Activated CD8-positive, alpha-beta memory T cell treated with anti-CD3 and anti-CD28 coated beads, Interleukin-2, amount 10 ng/mL, durations not matched to agents 7 days and 5 days (primary cell): ENCODE measurements at regions of chr1 and their contacts with region 1.

Region 1: DNA sequence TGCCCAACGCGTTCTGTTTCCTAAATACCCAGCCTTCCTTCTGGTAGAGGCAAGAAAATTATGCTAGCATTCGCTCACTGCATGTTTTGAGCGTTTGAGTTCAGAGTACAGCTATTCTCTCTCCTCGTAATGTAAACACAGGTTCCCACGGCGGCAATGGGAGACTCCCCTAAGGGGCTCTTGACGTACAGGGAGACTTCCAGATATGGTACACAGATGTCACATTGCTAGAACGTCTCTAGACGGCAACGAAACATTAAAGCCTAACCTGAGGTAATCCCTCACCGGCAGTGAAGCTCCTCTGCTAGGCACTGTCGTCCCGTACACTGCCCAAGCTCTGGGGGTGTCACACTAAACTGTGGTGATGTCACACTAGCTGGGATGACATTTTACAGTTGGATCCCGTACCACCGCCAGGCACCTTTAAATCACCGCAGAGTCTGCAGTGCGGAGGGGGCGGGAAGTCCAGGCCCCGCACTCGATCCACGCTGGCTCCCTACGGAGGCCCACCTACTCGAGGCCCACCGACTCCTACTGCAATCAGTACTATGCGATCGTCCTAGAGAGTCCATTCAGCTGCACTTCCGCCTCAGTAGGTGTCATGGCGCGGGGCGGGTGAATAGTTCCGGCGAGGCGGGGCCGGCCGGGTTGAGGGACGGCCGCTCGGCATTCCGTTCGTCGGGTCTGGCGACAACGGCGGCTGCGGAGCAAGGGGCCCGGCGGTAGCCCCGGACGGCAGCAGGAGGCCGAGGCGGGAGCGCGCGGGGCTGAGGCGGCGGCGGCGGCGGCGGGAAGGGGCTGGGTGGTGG is at the start of gene HIPK1:
- DNase-seq: peak; percentile 95
- ATAC-seq: peak; percentile 77
- H3K4me3 Mint-ChIP-seq: peak within 1 kb of the TSS; percentile 86
- H3K27ac Mint-ChIP-seq: peak within 1 kb of the TSS; percentile 100
- H3K4me1 Mint-ChIP-seq: peaks cover 41% of the 10 kb centered on the region
- H3K27me3 Mint-ChIP-seq: peaks cover under 1% of the 10 kb centered on the region
- total RNA-seq, gene HIPK1: 90.4 to 97.9 TPM

Region 2: GRCh38 chr1:113508364-113509164 is 420.6 kb before region 1 on chr1:
- CTCF ChIA-PET with region 1: no interaction called
- DNase-seq: no peak
- ATAC-seq: no peak
- H3K4me3 Mint-ChIP-seq: no peak overlapping the region
- H3K27ac Mint-ChIP-seq: no peak overlapping the region
- H3K4me1 Mint-ChIP-seq: no peaks in the 10 kb centered on the region
- H3K27me3 Mint-ChIP-seq: no peaks in the 10 kb centered on the region

Region 3: DNA sequence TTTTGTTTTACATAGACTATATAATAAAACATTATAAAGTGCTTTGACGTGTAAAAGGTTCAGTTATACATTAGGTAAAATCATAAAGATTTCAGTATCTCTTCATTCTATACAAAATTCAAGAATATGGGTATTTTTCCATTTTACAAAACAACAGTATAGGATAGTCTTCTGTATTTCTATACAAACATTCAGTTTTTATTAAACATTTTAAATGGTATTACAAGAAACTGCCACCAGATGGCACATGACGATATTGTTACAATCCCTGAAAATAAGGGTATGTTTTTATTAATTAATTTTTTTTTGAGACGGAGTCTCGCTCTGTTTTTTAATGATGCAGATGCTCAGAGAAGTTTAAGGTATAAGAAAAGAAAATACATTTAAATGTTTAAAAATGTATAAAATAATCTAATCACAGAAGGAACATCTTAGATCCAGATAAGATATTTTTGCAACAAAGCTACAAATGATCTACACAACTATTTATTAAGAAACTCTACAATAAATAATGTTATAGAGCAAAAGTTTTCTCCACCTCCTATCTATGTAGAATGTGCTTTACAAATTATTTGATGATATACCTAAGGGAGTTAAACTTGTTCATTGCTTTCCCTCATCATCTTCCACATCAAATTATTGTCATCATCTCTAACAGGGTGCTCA is 93.4 kb before region 1 on chr1:
- CTCF ChIA-PET with region 1: interaction called, 26 read pairs
- DNase-seq: no peak
- ATAC-seq: no peak
- H3K4me3 Mint-ChIP-seq: no peak overlapping the region
- H3K27ac Mint-ChIP-seq: peak overlapping the region; percentile 12
- H3K4me1 Mint-ChIP-seq: peaks cover 10% of the 10 kb centered on the region
- H3K27me3 Mint-ChIP-seq: no peaks in the 10 kb centered on the region

Region 4: DNA sequence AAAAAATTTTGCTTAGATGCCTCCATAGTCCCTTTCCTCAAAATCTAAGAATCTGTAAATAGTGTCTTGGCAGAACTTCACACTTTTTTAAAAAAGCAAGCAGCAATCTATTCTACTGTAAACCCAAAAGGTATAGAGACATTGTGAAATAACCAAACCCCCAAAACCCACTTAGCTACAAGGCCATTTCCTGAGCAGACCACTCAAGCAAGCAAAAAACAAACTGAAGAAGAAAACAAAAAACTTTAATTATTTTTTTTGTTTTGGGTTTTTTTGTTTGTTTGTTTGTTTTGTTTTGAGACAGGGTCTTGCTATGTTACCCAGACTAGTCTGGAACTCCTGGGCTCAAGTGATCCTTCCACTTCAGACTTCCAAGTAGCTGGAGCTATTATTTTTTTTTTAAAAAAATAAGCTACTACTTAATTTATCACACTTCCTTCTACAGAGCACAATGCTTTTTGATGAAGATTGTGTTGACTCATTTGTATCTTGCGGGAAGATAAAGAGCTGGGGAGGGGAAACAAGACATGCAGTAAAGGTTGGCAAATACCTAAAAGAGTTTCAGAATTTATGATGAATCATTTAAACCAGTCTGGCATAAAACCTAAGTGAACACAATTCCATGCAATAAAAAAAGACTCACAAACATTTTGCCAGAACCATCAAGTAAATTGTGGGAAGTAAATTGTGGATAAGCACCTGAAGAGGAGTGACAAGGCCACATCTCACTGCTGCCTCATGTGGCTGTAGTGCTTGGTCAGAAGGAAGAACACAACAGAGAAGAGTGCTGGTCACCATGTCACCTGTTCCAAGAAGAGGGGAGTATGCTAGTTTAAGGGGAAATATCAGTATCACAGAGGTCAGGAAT is 54.9 kb before region 1 on chr1:
- CTCF ChIA-PET with region 1: interaction called, 16 read pairs
- DNase-seq: peak; percentile 66
- ATAC-seq: peak; percentile 46
- H3K4me3 Mint-ChIP-seq: peak overlapping the region; percentile 65
- H3K27ac Mint-ChIP-seq: peak overlapping the region; percentile 87
- H3K4me1 Mint-ChIP-seq: peaks cover 62% of the 10 kb centered on the region
- H3K27me3 Mint-ChIP-seq: no peaks in the 10 kb centered on the region

Region 5: DNA sequence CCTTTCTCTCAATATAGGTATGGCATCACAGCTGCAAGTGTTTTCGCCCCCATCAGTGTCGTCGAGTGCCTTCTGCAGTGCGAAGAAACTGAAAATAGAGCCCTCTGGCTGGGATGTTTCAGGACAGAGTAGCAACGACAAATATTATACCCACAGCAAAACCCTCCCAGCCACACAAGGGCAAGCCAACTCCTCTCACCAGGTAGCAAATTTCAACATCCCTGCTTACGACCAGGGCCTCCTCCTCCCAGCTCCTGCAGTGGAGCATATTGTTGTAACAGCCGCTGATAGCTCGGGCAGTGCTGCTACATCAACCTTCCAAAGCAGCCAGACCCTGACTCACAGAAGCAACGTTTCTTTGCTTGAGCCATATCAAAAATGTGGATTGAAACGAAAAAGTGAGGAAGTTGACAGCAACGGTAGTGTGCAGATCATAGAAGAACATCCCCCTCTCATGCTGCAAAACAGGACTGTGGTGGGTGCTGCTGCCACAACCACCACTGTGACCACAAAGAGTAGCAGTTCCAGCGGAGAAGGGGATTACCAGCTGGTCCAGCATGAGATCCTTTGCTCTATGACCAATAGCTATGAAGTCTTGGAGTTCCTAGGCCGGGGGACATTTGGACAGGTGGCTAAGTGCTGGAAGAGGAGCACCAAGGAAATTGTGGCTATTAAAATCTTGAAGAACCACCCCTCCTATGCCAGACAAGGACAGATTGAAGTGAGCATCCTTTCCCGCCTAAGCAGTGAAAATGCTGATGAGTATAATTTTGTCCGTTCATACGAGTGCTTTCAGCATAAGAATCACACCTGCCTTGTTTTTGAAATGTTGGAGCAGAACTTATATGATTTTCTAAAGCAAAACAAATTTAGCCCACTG is 11.5 kb after region 1 on chr1:
- CTCF ChIA-PET with region 1: interaction called, 45 read pairs
- DNase-seq: peak; percentile 83
- ATAC-seq: peak; percentile 67
- H3K4me3 Mint-ChIP-seq: peak overlapping the region; percentile 64
- H3K27ac Mint-ChIP-seq: peak overlapping the region; percentile 84
- H3K4me1 Mint-ChIP-seq: peaks cover 73% of the 10 kb centered on the region
- H3K27me3 Mint-ChIP-seq: no peaks in the 10 kb centered on the region

Region 6: DNA sequence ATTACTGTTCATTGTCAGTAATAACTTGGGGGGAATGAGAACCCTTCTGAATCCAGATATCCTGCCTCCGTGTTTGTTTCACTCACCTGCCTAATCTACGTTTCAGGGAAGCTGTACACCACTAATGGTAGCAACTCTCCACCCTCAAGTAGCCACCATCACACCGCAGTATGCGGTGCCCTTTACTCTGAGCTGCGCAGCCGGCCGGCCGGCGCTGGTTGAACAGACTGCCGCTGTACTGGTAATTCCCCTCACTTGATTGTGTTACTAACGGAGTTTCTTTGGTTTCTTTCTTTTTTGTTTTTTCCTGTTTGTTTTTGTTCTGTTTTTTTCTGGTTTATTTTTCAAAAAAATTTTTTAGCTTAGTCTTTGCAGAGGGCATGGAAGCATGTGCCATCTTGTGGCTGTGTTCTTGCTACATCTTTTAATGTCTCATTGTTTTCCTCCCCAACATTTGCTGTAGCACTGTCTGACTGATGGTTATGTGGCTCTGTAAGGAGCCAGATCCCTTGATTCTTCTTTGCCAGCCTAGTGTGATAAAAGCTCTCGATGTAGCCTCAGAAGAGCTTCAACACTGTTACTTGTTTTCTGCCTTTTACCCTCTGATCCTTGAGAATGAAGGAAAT is 34.2 kb after region 1 on chr1:
- CTCF ChIA-PET with region 1: interaction called, 10 read pairs
- DNase-seq: no peak
- ATAC-seq: no peak
- H3K4me3 Mint-ChIP-seq: no peak overlapping the region
- H3K27ac Mint-ChIP-seq: peak overlapping the region; percentile 47
- H3K4me1 Mint-ChIP-seq: no peaks in the 10 kb centered on the region
- H3K27me3 Mint-ChIP-seq: no peaks in the 10 kb centered on the region

Region 7: GRCh38 chr1:113998327-113998726 is 69.2 kb after region 1 on chr1:
- CTCF ChIA-PET with region 1: no interaction called
- DNase-seq: no peak
- ATAC-seq: no peak
- H3K4me3 Mint-ChIP-seq: no peak overlapping the region
- H3K27ac Mint-ChIP-seq: no peak overlapping the region
- H3K4me1 Mint-ChIP-seq: no peaks in the 10 kb centered on the region
- H3K27me3 Mint-ChIP-seq: peaks cover 4% of the 10 kb centered on the region

Region 8: DNA sequence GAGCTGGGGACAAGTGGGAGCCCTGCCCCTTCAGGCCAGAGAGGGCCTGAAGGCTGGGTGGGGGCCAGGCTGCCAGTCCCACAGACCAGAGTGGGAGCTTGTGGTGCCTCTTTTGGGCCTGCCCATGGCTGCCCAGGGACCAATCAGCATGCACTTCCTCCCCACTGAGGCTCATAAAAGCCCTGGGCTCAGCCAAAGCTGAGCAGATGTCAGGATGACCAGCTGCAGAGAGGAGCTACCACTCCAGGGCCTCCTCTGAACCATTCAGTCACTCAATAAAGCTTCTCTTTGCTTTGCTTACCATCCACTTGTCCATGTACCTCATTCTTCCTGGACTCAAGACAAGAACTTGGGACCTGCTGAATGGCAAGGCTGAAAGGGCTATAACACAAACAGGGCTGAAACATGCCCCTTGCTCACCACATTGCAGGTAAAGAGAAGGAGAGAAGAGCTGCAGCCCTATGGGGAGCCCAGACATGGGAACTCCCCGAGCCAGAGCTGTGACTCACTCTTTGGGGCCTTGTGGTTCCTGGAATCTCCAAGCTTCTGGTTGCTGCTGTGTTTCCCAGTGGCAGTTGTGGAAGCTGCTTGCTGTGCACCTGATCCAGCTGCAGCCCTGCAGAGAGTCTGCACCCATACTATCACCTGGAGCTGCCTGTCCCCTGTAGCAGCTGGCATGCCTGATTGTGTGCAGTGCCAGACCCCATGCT is 132.1 kb after region 1 on chr1:
- CTCF ChIA-PET with region 1: no interaction called
- DNase-seq: no peak
- ATAC-seq: no peak
- H3K4me3 Mint-ChIP-seq: no peak overlapping the region
- H3K27ac Mint-ChIP-seq: no peak overlapping the region
- H3K4me1 Mint-ChIP-seq: no peaks in the 10 kb centered on the region
- H3K27me3 Mint-ChIP-seq: peaks cover 8% of the 10 kb centered on the region

Region 9: DNA sequence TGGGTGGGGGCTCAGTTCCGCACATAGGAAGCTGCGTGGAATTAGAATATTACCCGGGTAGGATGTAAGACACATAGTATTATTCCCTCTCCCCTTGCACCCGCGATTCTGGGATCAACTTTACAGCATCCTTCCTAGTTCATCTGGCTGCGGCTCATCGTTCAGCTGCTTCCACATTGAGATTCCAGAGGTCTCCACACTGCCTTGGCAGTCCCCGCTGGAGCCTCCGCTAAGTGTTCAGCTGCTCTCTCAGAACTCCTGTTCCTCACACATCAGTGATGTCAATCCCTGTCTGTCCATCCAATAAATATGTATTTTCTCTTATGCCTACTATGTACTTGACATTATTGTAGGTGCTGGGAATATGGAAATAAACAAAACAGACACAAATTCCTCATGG is 360.2 kb after region 1 on chr1:
- CTCF ChIA-PET with region 1: no interaction called
- DNase-seq: no peak
- ATAC-seq: no peak
- H3K4me3 Mint-ChIP-seq: no peak overlapping the region
- H3K27ac Mint-ChIP-seq: no peak overlapping the region
- H3K4me1 Mint-ChIP-seq: no peaks in the 10 kb centered on the region
- H3K27me3 Mint-ChIP-seq: no peaks in the 10 kb centered on the region